Posterior cingulate gyrus (tissue), 11 donors: ENCODE measurements at regions of chr3 and their contacts with region 1.

Region 1: DNA sequence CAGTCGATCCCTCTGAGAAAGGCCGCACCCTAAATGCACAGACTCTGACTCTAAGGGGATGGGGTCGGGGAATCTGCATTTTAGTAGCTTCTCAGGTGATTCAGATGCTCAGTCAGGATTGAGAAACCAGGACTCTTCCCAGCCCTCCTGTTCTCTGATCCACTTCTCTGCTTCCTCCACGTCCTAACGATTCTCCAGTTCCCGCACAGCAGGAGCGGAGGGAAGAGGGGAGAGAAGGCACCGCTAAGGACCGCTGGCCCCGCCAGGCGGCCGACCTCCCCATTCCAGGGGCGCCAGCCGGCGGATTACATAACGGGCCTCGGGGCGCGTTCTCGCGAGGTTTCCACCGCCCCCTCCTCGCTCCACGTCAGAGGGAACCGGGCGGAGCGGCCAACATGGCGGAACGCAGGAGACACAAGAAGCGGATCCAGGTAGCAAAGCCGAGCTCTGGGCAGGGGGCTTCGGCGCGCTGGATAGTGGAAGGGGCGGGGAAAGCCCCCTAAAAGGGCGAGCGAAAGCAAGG is at the start of gene SEC62:
- DNase-seq: peak; percentile 92 to 99 (median 96)

Region 2: DNA sequence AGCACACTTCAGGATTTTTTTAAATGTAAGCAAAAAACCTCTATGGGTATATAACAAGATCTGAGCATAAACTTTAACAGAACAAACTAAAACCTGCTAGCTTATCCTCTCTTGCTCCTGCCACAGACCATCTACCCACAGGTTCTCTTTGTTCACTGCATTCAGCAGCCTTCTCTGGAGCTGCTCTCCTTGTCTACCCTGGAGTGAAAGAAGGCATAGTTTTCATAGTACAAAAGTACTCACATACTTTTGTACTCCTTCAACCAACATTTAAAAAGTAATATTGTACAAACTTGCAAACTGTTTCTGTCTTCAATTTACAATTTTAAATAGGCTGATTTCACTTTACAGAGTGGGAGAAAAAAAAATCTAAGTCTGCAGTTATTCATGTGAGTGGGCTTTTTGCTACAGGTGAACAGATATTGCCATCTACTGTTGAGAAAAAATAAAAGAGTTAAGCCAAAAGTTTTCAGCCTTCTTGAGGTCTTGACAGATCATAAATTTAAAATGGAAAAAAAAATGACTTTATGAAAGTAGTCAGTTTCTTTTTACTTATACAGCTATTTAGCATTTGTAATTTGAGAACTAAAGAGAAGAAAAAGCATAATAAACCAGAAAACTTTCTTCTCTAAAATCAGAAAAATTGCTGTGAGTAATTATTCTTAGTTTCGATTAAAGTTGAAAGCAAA is 222.0 kb before region 1 on chr3:
- intact Hi-C with region 1: no loop called
- DNase-seq: no peak

Region 3: GRCh38 chr3:169772897-169773828 is 193.3 kb before region 1 on chr3 and contains the start of gene MYNN:
- intact Hi-C with region 1: loop called (anchors 10 kb)
- DNase-seq: peak; percentile 90 to 99 (median 94)

Region 4: GRCh38 chr3:169863458-169863899 is 103.0 kb before region 1 on chr3:
- intact Hi-C with region 1: loop called (anchors 5 kb)
- DNase-seq: peak in 5 of 10 donors; percentile 65 to 87 (median 71)